Activated CD4-positive, alpha-beta T cell treated with anti-CD3 and anti-CD28 coated beads, Interleukin-2, amount 10 ng/mL, durations not matched to agents 24 days and 14 days (primary cell): ENCODE measurements at regions of chr15 and their contacts with region 1.

Region 1: DNA sequence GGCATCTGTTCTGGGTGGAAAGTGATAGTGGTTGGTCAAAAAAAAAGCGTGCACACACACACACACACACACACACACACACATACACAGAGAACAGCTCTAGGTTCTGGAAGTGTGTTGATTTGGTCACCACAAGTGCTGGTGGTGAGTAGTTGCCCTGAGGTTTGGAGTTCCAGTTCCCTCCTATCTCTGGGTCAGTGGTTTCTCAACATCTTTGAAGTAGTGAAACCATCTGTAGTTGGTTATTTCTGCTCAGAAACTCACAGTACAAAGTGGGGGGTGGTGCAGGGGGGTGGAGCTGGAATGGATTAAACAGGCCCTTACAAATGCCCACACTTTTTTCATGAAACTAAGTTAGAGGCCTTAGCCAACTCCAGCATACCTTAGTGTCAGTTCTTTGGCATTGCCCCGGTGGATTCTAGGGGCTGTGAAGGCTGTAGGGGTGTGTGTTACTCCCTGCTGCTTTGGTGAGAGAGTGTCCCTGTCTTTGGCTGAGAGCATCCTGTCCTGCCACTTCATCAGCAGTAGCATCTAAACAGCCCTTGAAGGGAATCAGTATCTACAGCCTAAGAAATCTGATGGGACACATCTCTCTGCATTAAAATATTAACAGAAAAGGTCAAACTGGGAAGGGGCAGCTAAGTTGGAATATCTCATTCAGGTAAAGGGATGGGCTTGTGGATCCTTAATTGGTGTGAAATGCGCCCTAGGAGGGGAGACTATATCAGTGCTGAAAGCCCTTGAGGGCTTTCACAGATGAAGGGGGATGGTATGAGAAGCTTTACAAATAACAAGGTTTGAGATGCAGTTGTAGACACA is 20.6 kb downstream of the SMAD3 start:
- DNase-seq: peak; percentile 84
- H3K4me3 Mint-ChIP-seq: peak overlapping the region; percentile 74
- H3K27ac Mint-ChIP-seq: peak overlapping the region; percentile 96
- H3K4me1 Mint-ChIP-seq: peaks cover 95% of the 10 kb centered on the region
- H3K27me3 Mint-ChIP-seq: no peaks in the 10 kb centered on the region

Region 2: DNA sequence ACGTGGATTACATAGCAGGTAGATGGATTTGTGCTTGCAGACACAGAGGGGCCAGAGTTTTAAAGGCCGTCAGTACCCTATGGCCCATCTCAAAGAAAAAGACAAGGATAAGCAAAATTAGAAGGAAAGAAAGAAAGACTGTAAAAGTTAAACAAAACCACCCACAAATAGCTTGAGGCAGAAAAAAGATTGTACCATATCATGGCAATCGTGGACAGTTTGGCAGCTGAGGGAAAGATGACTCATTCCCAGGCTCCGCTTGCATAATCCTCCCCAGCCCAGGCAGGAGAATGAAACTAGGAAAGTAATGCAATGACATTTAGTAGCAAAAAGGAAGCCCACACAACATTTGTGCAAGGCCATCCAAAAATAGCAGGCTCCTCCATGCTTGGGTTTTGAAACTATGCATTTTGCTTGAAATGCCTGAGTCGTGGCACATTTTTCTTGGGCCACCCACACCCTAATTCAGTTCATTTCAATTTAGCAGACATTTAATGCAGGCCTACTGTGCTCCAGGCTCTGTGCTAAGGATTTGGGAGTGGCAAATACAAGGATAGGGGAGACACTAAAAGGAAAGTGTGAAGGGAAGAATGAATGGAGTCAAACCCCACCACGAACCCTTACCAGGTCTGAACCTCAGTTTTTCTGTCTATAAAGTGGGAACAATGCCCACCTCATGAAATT is 61.6 kb before region 1 on chr15:
- intact Hi-C with region 1: loop called (anchors 1 kb)
- DNase-seq: no peak
- H3K4me3 Mint-ChIP-seq: peak overlapping the region; percentile 49
- H3K27ac Mint-ChIP-seq: peak overlapping the region; percentile 64
- H3K4me1 Mint-ChIP-seq: peaks cover 28% of the 10 kb centered on the region
- H3K27me3 Mint-ChIP-seq: no peaks in the 10 kb centered on the region

Region 3: DNA sequence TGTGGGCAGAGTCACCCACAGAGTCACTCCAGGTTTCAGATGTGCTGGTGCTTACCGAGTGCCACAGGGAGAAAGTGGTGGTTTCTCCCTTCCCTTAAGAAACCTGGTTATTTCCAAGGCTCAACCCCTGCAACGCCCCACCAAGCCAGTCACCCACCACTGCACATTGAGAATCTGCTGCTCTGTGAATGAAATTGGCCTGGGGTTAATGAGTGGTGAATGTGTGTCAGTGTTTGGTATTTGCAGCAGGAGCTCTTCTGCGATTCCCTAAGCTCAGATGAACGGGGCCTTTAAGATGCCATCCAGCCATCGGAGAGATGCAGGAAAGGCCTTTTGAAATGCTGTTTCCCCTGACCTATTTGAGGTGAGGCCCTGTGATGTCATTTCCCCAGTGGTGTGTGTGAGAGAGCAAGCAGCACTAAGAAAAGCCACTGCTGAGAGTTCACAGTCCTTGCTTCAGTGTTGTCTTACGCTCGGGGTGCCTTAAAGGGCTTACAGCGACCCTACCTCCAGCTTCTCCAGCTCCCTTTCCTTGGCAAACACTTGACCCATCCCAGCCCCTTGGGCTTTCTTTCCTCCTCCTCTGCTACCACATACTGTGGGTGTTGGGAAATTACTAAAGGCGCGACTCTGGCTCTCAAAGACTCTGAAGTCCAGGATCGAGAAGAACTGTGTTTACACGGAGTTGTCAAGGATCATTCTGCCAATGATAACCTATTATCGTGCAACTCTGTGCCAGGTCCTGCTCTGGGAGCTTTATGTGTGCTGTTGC is 48.2 kb after region 1 on chr15:
- intact Hi-C with region 1: loop called (anchors 1 kb)
- DNase-seq: peak; percentile 92
- H3K4me3 Mint-ChIP-seq: peak overlapping the region; percentile 80
- H3K27ac Mint-ChIP-seq: peak overlapping the region; percentile 92
- H3K4me1 Mint-ChIP-seq: peaks cover 81% of the 10 kb centered on the region
- H3K27me3 Mint-ChIP-seq: no peaks in the 10 kb centered on the region

Region 4: GRCh38 chr15:67150028-67150860 is 64.2 kb after region 1 on chr15:
- intact Hi-C with region 1: loop called (anchors 1 kb)
- DNase-seq: peak; percentile 80
- H3K4me3 Mint-ChIP-seq: peak overlapping the region; percentile 73
- H3K27ac Mint-ChIP-seq: peak overlapping the region; percentile 86
- H3K4me1 Mint-ChIP-seq: peaks cover 67% of the 10 kb centered on the region
- H3K27me3 Mint-ChIP-seq: no peaks in the 10 kb centered on the region

Region 5: GRCh38 chr15:67240235-67241131 is 154.5 kb after region 1 on chr15:
- intact Hi-C with region 1: loop called (anchors 1 kb)
- DNase-seq: peak; percentile 72
- H3K4me3 Mint-ChIP-seq: peak overlapping the region; percentile 80
- H3K27ac Mint-ChIP-seq: peak overlapping the region; percentile 91
- H3K4me1 Mint-ChIP-seq: peaks cover 44% of the 10 kb centered on the region
- H3K27me3 Mint-ChIP-seq: no peaks in the 10 kb centered on the region

Region 6: GRCh38 chr15:67254238-67255175 is 168.5 kb after region 1 on chr15 and contains the starts of genes AAGAB and IQCH:
- intact Hi-C with region 1: loop called (anchors 1 kb)
- DNase-seq: peak; percentile 100
- H3K4me3 Mint-ChIP-seq: peak within 1 kb of the TSS; percentile 99
- H3K27ac Mint-ChIP-seq: peak within 1 kb of the TSS; percentile 98
- H3K4me1 Mint-ChIP-seq: peaks cover 28% of the 10 kb centered on the region
- H3K27me3 Mint-ChIP-seq: peaks cover 15% of the 10 kb centered on the region
- total RNA-seq, gene AAGAB: 44.9 and 48.6 TPM in 2 replicates
- total RNA-seq, gene IQCH: 0.70 and 1.6 TPM in 2 replicates

Region 7: GRCh38 chr15:67303490-67304363 is 217.7 kb after region 1 on chr15:
- intact Hi-C with region 1: loop called (anchors 1 kb)
- DNase-seq: peak; percentile 73
- H3K4me3 Mint-ChIP-seq: no peak overlapping the region
- H3K27ac Mint-ChIP-seq: no peak overlapping the region
- H3K4me1 Mint-ChIP-seq: peaks cover 4% of the 10 kb centered on the region
- H3K27me3 Mint-ChIP-seq: peaks cover 12% of the 10 kb centered on the region